Right cardiac atrium (tissue), 5 donors: ENCODE measurements at regions of chr10 and their contacts with region 1.

Region 1: GRCh38 chr10:598415-599170 is 90.9 kb downstream of the DIP2C start:
- DNase-seq: no peak
- ATAC-seq: no peak
- H3K4me3 ChIP-seq: no peak overlapping the region
- H3K27ac ChIP-seq: no peak overlapping the region
- H3K4me1 ChIP-seq: peaks cover 6% of the 10 kb centered on the region
- H3K27me3 ChIP-seq: no peaks in the 10 kb centered on the region

Region 2: DNA sequence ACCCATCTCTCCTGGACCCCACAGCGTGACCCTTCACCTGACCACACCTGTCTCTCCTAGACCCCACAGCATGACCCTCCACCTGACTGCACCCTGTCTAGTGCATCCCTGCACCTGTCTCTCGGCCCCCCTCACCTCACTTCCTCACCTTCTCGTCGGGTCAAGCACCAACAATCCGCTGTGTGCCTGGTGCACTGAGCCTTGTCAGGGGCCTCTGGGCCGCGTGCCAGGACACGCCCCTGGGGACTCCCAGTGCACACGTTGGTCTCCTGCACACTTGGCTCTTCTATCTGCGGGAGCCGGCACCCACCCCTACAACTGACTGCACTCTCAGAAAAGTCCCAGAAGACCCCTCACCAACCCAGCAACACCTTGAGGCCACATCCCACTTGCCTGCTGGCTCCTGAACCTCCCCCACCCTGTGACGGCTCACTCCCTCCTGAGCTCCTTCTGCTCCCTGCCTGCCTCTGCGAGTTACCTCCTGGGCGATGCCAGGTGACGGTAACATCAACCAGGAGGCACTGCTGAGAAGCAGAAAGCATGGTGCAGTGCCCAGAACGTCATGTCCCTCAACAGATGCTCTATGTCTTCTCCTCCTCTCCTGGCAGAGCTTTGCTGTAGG is 56.7 kb before region 1 on chr10:
- intact Hi-C with region 1: no loop called
- DNase-seq: peak in 2 of 3 donors; percentile 70 to 76
- ATAC-seq: peak; percentile 13 to 46
- H3K4me3 ChIP-seq: no peak overlapping the region
- H3K27ac ChIP-seq: no peak overlapping the region
- H3K4me1 ChIP-seq: peaks cover 2% of the 10 kb centered on the region
- H3K27me3 ChIP-seq: no peaks in the 10 kb centered on the region

Region 3: GRCh38 chr10:784403-785088 is 186.0 kb after region 1 on chr10:
- intact Hi-C with region 1: loop called in 1 of 4 experiments (anchors 10 kb)
- DNase-seq: peak; percentile 71 to 79 (median 74)
- ATAC-seq: peak; percentile 54 to 82
- H3K4me3 ChIP-seq: peak overlapping the region; percentile 32
- H3K27ac ChIP-seq: no peak overlapping the region
- H3K4me1 ChIP-seq: no peaks in the 10 kb centered on the region
- H3K27me3 ChIP-seq: no peaks in the 10 kb centered on the region